H1 (cell line): ENCODE measurements at regions of chr20 and their contacts with region 1.

Region 1: GRCh38 chr20:49610701-49611538 is 43.0 kb upstream of the PTGIS start:
- DNase-seq: peak; percentile 73 to 97
- H3K4me3 ChIP-seq: peak overlapping the region; percentile 8 to 53 (median 46); a peak in 7 of 8 replicates
- H3K27ac ChIP-seq: no peak overlapping the region
- H3K4me1 ChIP-seq: peaks cover 0 to 5% (median 2%) of the 10 kb centered on the region in 4 experiments; a peak in 1 of 7 replicates
- H3K27me3 ChIP-seq: no peaks in the 10 kb centered on the region
- CTCF ChIP-seq: peak; percentile 86 to 99 (median 95)
- EP300 ChIP-seq: 0 out of 3 replicates have a peak, but pooled peaks of 1 of the 2 experiments have one; percentile 31
- POLR2A ChIP-seq: no peak
- RAD21 ChIP-seq: peak; percentile 95 to 98

Region 2: GRCh38 chr20:49161428-49162152 is 449.3 kb before region 1 on chr20:
- CTCF ChIA-PET with region 1: no interaction called
- POLR2A ChIA-PET with region 1: no interaction called
- DNase-seq: no peak
- H3K4me3 ChIP-seq: no peak overlapping the region
- H3K27ac ChIP-seq: no peak overlapping the region
- H3K4me1 ChIP-seq: no peaks in the 10 kb centered on the region
- H3K27me3 ChIP-seq: no peaks in the 10 kb centered on the region
- CTCF ChIP-seq: no peak
- EP300 ChIP-seq: no peak
- POLR2A ChIP-seq: no peak
- RAD21 ChIP-seq: no peak

Region 3: DNA sequence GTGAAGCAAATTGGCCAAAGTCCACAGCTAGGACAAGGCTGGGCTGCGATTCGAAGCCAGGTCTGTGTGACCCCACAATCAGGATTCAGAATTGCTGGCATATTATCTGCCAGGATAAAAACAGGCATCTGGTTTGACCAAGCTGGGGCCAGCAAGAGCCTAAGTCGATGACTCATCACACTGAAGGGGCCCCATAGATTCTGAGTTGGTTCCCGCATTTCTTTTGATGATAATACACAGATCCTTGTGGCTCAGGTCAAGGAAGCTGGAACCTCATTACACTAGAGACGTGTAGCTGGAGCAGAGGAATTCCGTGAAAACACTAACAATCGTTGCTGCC is 134.9 kb before region 1 on chr20:
- CTCF ChIA-PET with region 1: no interaction called
- POLR2A ChIA-PET with region 1: no interaction called
- DNase-seq: no peak
- H3K4me3 ChIP-seq: no peak overlapping the region
- H3K27ac ChIP-seq: no peak overlapping the region
- H3K4me1 ChIP-seq: no peaks in the 10 kb centered on the region; a peak in 1 of 7 replicates
- H3K27me3 ChIP-seq: no peaks in the 10 kb centered on the region; a peak in 1 of 7 replicates
- CTCF ChIP-seq: no peak
- EP300 ChIP-seq: no peak
- POLR2A ChIP-seq: no peak
- RAD21 ChIP-seq: no peak

Region 4: DNA sequence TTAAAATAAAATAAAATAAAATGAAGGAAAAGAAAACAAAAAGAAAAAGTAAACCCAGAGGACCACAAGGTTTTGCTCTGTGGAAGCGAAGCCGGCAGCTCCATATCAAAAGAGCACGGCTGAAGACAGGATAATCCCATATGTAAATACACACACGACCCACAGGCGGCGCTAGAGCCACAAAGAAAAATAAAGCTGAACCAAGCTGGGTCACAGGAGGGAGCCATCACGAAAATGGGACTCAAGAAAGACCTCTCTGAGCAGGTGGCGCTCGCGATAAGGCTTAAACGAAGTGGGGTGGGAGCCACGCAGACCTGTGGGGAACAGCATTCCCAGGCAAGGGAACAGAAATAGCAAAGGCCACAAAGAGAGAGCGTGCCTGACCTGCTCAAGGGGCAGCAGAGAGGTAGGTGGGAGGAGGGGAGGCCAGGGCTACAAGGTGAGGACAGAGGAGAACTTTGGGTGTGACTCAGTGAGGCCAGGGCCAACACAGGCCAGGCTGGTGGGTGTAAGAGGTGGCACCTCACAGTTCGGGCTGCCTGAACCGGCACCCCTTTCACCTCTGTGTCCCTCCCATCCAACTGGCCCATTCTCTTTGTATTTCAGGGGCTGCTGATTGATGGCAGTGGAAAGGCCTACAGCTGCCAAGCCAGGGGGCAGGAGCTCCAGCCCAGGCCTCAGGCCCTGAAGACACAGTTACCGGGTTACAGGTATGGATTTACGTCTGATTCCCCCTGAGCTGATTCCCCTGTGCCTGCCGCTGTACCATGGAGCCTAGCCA is 69.0 kb before region 1 on chr20:
- CTCF ChIA-PET with region 1: interaction called, 665 read pairs
- POLR2A ChIA-PET with region 1: interaction called, 4 read pairs
- DNase-seq: peak in 1 of 2 experiments; percentile 86
- H3K4me3 ChIP-seq: no peak overlapping the region
- H3K27ac ChIP-seq: no peak overlapping the region
- H3K4me1 ChIP-seq: no peaks in the 10 kb centered on the region
- H3K27me3 ChIP-seq: no peaks in the 10 kb centered on the region
- CTCF ChIP-seq: peak; percentile 60 to 99 (median 90)
- EP300 ChIP-seq: no peak
- POLR2A ChIP-seq: no peak
- RAD21 ChIP-seq: peak; percentile 93 to 94

Region 5: DNA sequence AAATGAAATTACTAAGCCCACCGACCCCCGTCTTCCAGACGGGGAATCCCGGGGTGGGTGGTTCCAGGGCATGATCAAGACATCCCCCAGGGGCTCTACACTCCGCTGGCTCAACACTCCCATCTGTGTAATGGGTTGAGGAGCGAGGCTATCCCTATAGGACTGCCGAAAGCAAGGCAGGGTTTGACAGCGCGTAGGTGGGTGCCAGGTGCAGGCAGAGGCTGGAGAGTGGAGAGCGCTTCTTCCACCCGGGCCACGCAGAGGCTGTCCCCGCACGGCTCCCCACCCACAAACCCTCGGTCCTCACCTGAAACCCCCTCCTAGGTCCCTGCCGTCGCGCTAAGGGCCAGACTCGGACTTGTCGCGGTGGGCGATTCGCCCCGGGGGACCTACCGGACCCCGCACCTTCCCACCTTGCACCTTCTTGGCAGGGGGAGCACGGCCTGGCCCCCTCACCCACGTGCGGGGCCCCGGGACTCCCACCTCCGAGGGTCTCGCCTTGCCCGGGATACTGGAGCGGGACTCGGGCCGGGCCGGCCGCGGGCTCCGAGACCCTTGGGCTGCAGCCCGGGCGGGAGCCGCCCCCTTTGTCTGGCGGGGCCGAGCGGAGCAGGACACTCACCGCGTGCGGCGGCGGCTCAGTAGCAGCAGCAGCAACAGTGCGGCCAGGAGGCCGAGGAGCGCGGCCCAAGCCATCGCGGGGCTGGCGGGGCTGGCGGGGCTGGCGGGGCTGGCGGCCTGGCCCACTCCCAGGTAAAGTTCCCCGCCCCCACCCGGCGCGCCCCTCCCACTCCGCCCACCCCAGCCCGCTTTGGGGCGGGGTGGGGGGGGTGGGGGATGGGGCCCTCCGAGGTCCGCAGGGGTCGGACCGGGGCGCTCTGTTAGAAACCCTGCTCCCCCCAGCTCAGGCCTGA is 43.2 kb before region 1 on chr20 and contains the start of gene PTGIS:
- CTCF ChIA-PET with region 1: interaction called, 18 read pairs
- POLR2A ChIA-PET with region 1: no interaction called
- DNase-seq: peak in 1 of 2 experiments; percentile 83
- H3K4me3 ChIP-seq: peak within 1 kb of the TSS; percentile 59 to 99 (median 70)
- H3K27ac ChIP-seq: peak within 1 kb of the TSS; percentile 84
- H3K4me1 ChIP-seq: peaks cover 5 to 25% (median 16%) of the 10 kb centered on the region in 4 experiments
- H3K27me3 ChIP-seq: no peaks in the 10 kb centered on the region
- CTCF ChIP-seq: no peak
- EP300 ChIP-seq: no peak
- POLR2A ChIP-seq: peak in 1 of 2 experiments; percentile 39; a peak in 2 of 3 replicates
- RAD21 ChIP-seq: no peak
- total RNA-seq, gene PTGIS: 35.5 and 40.2 TPM in 2 replicates

Region 6: DNA sequence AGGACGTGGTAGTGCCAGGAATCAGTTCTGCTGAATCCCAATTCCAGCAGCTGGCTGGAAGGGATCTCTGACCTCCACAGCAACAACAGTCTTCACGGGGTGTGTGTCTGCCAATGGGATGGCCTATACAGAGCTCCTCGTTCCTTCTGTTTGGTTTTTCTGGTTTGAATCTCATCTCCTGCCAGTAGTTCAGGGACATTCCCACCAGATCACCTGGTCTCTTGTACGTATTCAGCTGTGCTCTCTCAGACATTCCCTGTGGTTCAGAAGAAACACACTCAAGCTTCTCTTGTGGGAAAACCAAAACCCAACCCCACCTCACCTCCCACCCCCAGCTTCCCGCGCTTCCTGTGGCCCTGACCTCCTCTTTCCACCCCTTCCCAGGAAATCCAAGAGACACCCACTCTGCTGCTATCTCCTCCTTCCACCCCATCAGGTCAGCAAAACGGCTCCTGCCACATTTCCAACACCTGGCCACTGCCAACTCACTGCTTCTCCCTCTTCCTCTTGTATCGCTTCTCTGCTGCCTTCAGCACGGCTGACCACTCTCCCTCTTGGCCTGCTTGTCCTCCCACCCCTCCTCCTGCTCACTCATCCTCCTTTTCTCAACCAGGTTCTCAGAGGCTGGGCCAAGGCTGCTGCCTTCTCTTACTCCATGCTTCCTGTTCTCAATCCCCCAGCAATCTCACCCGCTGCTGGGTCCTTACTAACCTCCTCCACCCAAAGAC is 20.3 kb after region 1 on chr20:
- CTCF ChIA-PET with region 1: interaction called, 18 read pairs
- POLR2A ChIA-PET with region 1: interaction called, 7 read pairs
- DNase-seq: no peak
- H3K4me3 ChIP-seq: no peak overlapping the region
- H3K27ac ChIP-seq: peak overlapping the region; percentile 24; the same call in 1 of the 2 replicates
- H3K4me1 ChIP-seq: peaks cover 5 to 20% (median 12%) of the 10 kb centered on the region in 4 experiments
- H3K27me3 ChIP-seq: no peaks in the 10 kb centered on the region
- CTCF ChIP-seq: no peak
- EP300 ChIP-seq: no peak
- POLR2A ChIP-seq: peak in 1 of 2 experiments; percentile 26; a peak in 2 of 3 replicates
- RAD21 ChIP-seq: no peak

Region 7: DNA sequence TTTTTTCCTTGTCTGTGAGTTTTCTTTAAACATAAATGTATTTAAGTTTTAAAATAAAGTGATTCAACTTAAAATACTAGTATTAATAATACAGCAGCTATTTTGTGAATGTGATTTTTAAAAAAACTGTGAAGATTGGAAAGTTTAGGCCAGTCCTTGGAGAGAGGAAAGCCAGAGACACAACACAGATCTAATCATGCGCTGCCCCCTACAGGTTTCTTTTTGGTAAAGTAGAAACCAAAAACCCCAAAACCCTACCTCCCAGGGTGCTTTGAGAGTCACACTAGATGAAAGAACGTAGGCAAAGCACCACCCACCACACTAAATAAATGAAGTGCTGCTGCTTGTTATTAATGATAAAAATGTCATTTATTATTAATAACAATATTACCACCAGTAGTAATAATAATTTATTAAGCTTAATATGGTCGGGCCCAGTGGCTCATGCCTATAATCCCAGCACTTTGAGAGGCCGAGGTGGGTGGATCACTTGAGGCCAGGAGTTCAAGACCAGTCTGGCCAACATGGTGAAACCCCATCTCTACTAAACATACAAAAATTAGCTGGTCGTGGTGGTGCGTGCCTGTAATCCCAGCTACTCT is 235.4 kb after region 1 on chr20:
- CTCF ChIA-PET with region 1: interaction called, 54 read pairs
- POLR2A ChIA-PET with region 1: no interaction called
- DNase-seq: no peak
- H3K4me3 ChIP-seq: no peak overlapping the region
- H3K27ac ChIP-seq: no peak overlapping the region
- H3K4me1 ChIP-seq: peaks cover 0 to 5% (median 4%) of the 10 kb centered on the region in 4 experiments; a peak in 4 of 7 replicates
- H3K27me3 ChIP-seq: no peaks in the 10 kb centered on the region
- CTCF ChIP-seq: peak in 2 of 3 experiments; percentile 60 to 64; a peak in 3 of 4 replicates
- EP300 ChIP-seq: no peak
- POLR2A ChIP-seq: no peak
- RAD21 ChIP-seq: peak; percentile 77 to 79

Region 8: DNA sequence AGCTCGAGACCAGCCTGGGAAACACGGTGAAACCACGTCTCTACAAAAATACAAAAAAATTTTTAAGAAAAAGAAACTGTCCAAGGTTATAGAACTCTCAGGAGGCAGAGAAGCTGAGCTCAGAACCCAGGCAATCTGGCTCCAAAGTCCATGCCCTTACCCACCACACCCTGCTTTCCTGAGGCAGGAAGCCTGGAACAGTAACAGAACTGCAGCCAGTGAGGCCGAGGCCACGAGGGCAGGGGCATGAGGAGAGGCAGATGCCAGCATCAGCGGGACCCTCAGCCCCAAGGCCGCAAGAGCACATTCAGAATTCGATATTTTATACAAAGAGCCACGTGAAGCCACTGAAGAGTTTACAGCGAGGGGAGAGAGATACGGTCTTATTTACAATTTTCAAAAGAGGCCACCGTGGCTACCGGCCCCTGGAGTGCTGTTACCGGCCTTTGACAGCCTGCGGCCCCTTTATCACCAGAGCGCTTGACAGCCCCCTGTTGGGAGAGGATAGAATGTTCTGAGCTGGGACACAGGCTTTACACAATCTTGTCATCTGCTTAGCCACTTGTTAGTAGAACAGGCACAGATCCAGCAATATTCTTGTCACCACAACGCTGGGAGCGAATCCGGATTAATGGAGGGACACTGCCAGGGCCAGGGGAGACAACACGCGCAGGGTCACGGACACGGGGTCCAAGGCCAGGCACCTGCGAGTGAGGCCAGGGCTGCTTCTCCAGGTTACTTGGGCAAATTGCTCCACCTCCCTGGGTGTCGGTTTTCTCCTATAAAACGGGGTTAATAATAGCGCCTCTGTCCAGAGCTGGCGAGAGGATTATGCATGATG is 298.8 kb after region 1 on chr20:
- CTCF ChIA-PET with region 1: interaction called, 17 read pairs
- POLR2A ChIA-PET with region 1: no interaction called
- DNase-seq: no peak
- H3K4me3 ChIP-seq: no peak overlapping the region
- H3K27ac ChIP-seq: no peak overlapping the region
- H3K4me1 ChIP-seq: peaks cover 0 to 6% (median 3%) of the 10 kb centered on the region in 4 experiments; a peak in 2 of 7 replicates
- H3K27me3 ChIP-seq: no peaks in the 10 kb centered on the region
- CTCF ChIP-seq: peak; percentile 7 to 47 (median 31)
- EP300 ChIP-seq: no peak
- POLR2A ChIP-seq: no peak
- RAD21 ChIP-seq: peak; percentile 34 to 50; a peak in 3 of 4 replicates